ENCODE measurements at regions of chr20 and their contacts with region 1.

Region 1: GRCh38 chr20:49896204-49896979 is 18.9 kb downstream of the SPATA2 start:
- DNase-seq: peak in 1 of 2 donors; percentile 21
- ATAC-seq: peak; percentile 49 to 74
- H3K4me3 ChIP-seq: no peak overlapping the region
- H3K27ac ChIP-seq: no peak overlapping the region
- H3K4me1 ChIP-seq: peaks cover 20 to 30% of the 10 kb centered on the region in 2 donors
- H3K27me3 ChIP-seq: no peaks in the 10 kb centered on the region
- CTCF ChIP-seq: no peak
- POLR2A ChIP-seq: no peak

Region 2: GRCh38 chr20:49821870-49822331 is 74.5 kb before region 1 on chr20:
- in situ Hi-C with region 1: no loop called
- intact Hi-C with region 1: no loop called
- DNase-seq: peak in 1 of 2 donors; percentile 35
- ATAC-seq: peak; percentile 59 to 62
- H3K4me3 ChIP-seq: no peak overlapping the region
- H3K27ac ChIP-seq: peak overlapping the region; percentile 81 to 89 (median 88)
- H3K4me1 ChIP-seq: peaks cover 26 to 51% of the 10 kb centered on the region in 2 donors
- H3K27me3 ChIP-seq: no peaks in the 10 kb centered on the region
- CTCF ChIP-seq: peak in 2 of 5 experiments; percentile 23 to 29
- POLR2A ChIP-seq: no peak

Region 3: DNA sequence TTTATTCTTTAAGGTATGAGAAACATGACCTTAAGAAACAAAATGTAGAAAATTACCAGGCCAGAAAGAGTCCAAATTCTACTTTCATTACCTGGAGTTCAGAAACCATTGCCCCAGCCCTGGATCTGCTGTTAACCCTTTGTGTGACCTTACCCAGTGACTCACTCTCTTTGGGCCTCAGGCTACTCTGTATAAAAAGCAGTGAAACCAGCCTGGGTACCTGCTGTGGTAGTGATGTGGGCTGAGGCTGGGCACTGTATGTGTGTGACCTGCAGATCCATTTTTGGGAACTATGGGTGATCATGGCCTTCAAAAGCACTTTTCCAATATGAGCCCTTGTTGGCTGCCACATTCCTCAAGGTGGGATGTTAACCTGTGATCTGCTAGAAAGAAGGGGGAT is 36.5 kb before region 1 on chr20:
- in situ Hi-C with region 1: no loop called
- intact Hi-C with region 1: loop called (anchors 5 kb)
- DNase-seq: no peak
- ATAC-seq: no peak
- H3K4me3 ChIP-seq: no peak overlapping the region
- H3K27ac ChIP-seq: no peak overlapping the region
- H3K4me1 ChIP-seq: peaks cover 0 to 7% of the 10 kb centered on the region in 2 donors
- H3K27me3 ChIP-seq: no peaks in the 10 kb centered on the region
- CTCF ChIP-seq: no peak
- POLR2A ChIP-seq: no peak